CD4-positive, alpha-beta memory T cell (primary cell): ENCODE measurements at regions of chr7 and their contacts with region 1.

Region 1: DNA sequence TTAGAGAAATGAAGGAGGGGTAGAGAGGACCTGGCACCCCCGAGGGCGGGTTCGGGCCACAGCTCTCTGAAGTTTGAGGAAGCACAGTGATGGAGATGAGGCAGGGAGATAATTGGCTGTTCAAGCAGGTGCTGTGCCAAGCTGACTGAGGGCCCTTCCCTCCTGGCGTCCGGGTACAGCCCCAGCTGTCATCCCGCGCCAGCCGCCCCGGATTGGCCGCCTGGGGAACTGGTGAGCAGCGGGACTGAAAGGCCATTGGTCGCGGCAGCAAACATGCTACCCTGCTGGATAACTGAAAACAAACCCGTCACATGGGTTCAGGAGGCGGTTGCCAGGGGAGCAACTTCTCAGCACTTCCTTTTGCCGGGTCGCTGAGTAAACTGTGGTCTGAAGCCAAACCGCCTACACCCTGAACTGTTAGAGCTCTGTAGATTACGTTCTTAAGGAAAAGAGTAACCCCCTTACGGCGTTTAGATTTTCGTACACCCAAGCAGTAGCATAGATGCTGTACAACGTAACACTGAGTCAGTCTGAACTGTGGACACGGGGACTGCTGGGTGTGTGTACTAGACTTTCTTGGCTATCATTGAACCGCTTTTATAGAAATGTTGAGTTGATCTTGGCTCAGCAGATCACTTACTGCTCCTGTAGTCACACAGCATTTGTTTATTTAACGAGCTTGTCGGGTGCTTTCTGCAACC is 1.3 kb downstream of the INSIG1 start:
- DNase-seq: peak; percentile 95 to 99 (median 98)
- H3K4me3 ChIP-seq: peak overlapping the region; percentile 67 to 68
- H3K4me3 Mint-ChIP-seq: peak overlapping the region; percentile 90 to 96 (median 93)
- H3K27ac ChIP-seq: peak overlapping the region; percentile 87
- H3K27ac Mint-ChIP-seq: peak overlapping the region; percentile 92 to 99 (median 96)
- H3K4me1 ChIP-seq: peaks cover 44% of the 10 kb centered on the region
- H3K4me1 Mint-ChIP-seq: peaks cover 29 to 50% (median 36%) of the 10 kb centered on the region in 4 donors
- H3K27me3 ChIP-seq: no peaks in the 10 kb centered on the region
- H3K27me3 Mint-ChIP-seq: no peaks in the 10 kb centered on the region

Region 2: DNA sequence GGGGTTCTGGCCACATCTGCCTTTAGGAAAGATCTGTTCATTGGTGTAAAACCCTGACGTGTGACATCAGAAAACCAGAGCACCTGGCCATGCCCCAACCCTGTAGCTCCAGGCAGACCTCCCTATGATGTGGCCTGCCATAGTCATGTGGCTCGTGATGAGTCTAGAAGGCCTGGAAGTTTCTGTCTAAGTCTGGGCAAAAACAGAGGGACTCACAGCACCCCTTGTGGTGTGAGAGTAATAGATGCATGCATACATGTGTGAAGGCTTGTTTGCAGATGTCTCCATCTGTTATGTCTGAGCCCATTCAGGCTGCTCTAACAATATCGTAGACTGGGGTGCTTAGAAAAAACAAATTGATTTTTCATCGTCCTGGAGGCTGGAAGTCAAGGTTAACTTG is 605.3 kb before region 1 on chr7:
- CTCF ChIA-PET with region 1: no interaction called
- POLR2A ChIA-PET with region 1: no interaction called
- intact Hi-C with region 1: no loop called
- DNase-seq: no peak
- H3K4me3 ChIP-seq: no peak overlapping the region
- H3K4me3 Mint-ChIP-seq: no peak overlapping the region
- H3K27ac ChIP-seq: no peak overlapping the region
- H3K27ac Mint-ChIP-seq: no peak overlapping the region
- H3K4me1 ChIP-seq: no peaks in the 10 kb centered on the region
- H3K4me1 Mint-ChIP-seq: no peaks in the 10 kb centered on the region
- H3K27me3 ChIP-seq: no peaks in the 10 kb centered on the region
- H3K27me3 Mint-ChIP-seq: peaks cover 0 to 3% of the 10 kb centered on the region in 2 donors

Region 3: DNA sequence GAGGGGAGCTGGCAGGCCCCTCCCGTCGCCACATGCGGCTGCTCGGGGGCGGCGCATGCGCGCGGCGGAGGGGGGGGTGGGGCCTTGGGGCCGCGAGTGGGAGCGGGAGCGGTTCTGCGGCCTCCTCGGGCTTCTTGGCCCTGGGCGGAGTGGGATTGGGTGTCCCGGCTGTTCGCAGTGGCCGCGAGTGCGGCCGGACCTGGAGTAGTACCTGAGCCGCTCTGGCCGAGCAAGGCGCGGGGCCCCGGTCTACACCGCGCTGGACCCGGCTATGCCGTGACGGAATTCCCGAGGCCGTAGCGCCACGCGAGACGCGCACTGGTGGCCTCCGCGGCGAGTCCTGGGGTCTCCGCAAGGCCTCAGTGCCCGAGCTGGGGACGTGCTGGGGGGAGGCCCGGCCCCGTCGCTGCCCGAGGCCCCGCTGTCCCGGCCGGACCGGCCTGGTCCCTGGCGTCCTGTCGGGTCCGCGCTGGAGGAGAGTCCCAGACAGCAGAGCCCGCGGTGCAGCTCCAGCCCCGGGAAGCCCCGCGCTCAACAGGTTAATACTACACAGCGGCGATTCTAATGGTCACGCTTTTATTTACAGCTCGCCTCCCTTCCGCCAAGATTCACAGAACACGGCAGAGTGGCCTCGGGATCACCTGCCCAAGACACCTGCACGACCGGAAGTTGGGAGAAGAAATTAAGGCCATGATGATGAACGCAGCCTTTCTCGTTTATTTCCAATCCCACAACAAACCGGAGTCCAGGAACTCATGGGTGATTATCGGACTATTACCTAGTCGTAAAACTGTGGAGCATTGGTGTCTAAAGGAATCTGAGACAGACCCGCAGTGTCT is 295.4 kb before region 1 on chr7:
- CTCF ChIA-PET with region 1: no interaction called
- POLR2A ChIA-PET with region 1: interaction called, 33 read pairs
- intact Hi-C with region 1: loop called (anchors 1 kb)
- DNase-seq: peak; percentile 80 to 92 (median 88)
- H3K4me3 ChIP-seq: peak overlapping the region; percentile 81 to 91
- H3K4me3 Mint-ChIP-seq: peak overlapping the region; percentile 93 to 97 (median 95)
- H3K27ac ChIP-seq: peak overlapping the region; percentile 84
- H3K27ac Mint-ChIP-seq: peak overlapping the region; percentile 38 to 96 (median 95)
- H3K4me1 ChIP-seq: peaks cover 19% of the 10 kb centered on the region
- H3K4me1 Mint-ChIP-seq: peaks cover 8 to 16% (median 12%) of the 10 kb centered on the region in 4 donors
- H3K27me3 ChIP-seq: no peaks in the 10 kb centered on the region
- H3K27me3 Mint-ChIP-seq: no peaks in the 10 kb centered on the region

Region 4: DNA sequence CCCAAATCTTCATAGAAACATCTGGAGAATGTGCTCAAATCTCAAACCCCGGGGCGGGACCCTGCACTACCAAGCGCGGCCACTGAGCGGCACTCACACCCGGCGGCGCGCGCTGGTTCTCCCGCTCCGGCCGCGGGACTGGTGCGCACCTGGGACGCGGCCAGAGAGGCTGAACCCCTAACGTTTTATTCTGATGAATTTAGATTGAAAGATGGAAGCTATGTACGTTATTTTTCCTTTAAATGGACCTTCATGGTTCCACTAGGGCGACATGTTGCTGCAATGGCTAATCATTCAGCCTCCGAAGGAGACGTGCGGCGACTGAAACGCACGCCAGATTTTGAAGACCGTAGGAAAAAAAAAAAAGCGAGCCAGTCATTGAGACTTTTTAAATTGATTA is 108.3 kb before region 1 on chr7:
- CTCF ChIA-PET with region 1: interaction called, 9 read pairs
- POLR2A ChIA-PET with region 1: interaction called, 7 read pairs
- intact Hi-C with region 1: loop called (anchors 1 kb)
- DNase-seq: peak in 4 of 5 donors; percentile 36 to 53 (median 40)
- H3K4me3 ChIP-seq: no peak overlapping the region
- H3K4me3 Mint-ChIP-seq: peak overlapping the region in 1 of 8 donors; percentile 26
- H3K27ac ChIP-seq: no peak overlapping the region
- H3K27ac Mint-ChIP-seq: no peak overlapping the region
- H3K4me1 ChIP-seq: no peaks in the 10 kb centered on the region
- H3K4me1 Mint-ChIP-seq: peaks cover 1 to 7% (median 4%) of the 10 kb centered on the region in 4 donors
- H3K27me3 ChIP-seq: no peaks in the 10 kb centered on the region
- H3K27me3 Mint-ChIP-seq: peaks cover 3 to 18% of the 10 kb centered on the region in 2 donors

Region 5: DNA sequence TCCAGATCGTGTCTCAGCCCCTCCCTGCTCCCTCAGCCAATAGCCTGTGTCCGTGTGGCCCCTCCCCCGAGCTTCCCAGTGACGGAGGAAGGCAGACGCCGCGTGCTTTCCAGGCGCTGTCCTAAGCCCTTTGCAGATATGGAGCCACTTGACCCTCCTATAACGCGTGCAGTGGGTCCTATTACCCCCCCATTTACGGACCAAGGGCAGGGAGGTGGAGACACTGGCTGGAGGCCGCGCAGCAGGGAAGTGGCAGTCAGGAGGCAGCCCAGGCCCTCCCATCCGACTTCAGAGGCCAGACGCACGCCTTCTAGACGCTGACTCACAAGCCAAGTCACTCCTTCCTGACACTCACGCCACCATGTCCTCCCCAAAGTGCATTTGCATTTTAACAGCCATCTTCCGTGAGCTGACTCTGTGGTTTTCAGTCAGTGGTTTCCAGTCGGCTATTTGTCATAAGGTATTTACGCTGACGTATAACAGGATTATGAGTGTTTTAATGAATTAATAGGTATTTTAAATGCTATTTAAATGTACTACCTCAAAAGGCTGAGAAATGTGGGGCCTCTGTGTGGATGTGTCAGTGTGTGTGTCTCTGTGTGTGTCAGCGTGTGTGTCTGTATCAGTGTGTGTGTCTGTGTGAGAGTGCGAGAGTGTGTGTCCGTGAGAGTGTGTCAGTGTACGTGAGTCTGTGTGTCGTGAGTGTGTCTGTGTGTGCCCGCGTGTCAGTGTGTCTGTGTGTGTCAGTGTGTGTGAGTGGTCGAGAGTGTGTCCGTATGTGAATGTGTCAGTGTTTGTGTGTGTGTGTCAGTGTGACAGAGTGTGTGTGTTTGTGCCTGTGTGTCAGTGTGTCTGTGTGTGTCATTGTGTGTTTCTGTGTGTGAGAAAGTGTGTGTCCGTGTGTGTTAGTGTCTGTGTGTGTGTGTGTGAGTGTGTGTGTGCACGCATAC is 93.3 kb before region 1 on chr7:
- CTCF ChIA-PET with region 1: interaction called, 7 read pairs
- POLR2A ChIA-PET with region 1: interaction called, 176 read pairs
- intact Hi-C with region 1: loop called (anchors 1 kb)
- DNase-seq: peak; percentile 88 to 97 (median 90)
- H3K4me3 ChIP-seq: peak overlapping the region; percentile 66 to 89
- H3K4me3 Mint-ChIP-seq: peak overlapping the region; percentile 83 to 93 (median 88)
- H3K27ac ChIP-seq: peak overlapping the region; percentile 77
- H3K27ac Mint-ChIP-seq: peak overlapping the region; percentile 92 to 99 (median 96)
- H3K4me1 ChIP-seq: peaks cover 15% of the 10 kb centered on the region
- H3K4me1 Mint-ChIP-seq: peaks cover 15 to 27% (median 22%) of the 10 kb centered on the region in 4 donors
- H3K27me3 ChIP-seq: no peaks in the 10 kb centered on the region
- H3K27me3 Mint-ChIP-seq: no peaks in the 10 kb centered on the region

Region 6: GRCh38 chr7:155283565-155284194 is 15.3 kb before region 1 on chr7:
- CTCF ChIA-PET with region 1: interaction called, 5 read pairs
- POLR2A ChIA-PET with region 1: interaction called, 22 read pairs
- intact Hi-C with region 1: no loop called
- DNase-seq: no peak
- H3K4me3 ChIP-seq: no peak overlapping the region
- H3K4me3 Mint-ChIP-seq: no peak overlapping the region
- H3K27ac ChIP-seq: no peak overlapping the region
- H3K27ac Mint-ChIP-seq: no peak overlapping the region
- H3K4me1 ChIP-seq: no peaks in the 10 kb centered on the region
- H3K4me1 Mint-ChIP-seq: peaks cover 16 to 24% (median 21%) of the 10 kb centered on the region in 4 donors
- H3K27me3 ChIP-seq: no peaks in the 10 kb centered on the region
- H3K27me3 Mint-ChIP-seq: peaks cover under 1 to 7% of the 10 kb centered on the region in 2 donors

Region 7: GRCh38 chr7:155312633-155313032 is 13.6 kb after region 1 on chr7:
- CTCF ChIA-PET with region 1: interaction called, 3 read pairs
- POLR2A ChIA-PET with region 1: interaction called, 10 read pairs
- intact Hi-C with region 1: no loop called
- DNase-seq: no peak
- H3K4me3 ChIP-seq: no peak overlapping the region
- H3K4me3 Mint-ChIP-seq: no peak overlapping the region
- H3K27ac ChIP-seq: no peak overlapping the region
- H3K27ac Mint-ChIP-seq: peak overlapping the region in 3 of 7 donors; percentile 4 to 48 (median 36)
- H3K4me1 ChIP-seq: no peaks in the 10 kb centered on the region
- H3K4me1 Mint-ChIP-seq: peaks cover 0 to 3% (median 0%) of the 10 kb centered on the region in 4 donors
- H3K27me3 ChIP-seq: no peaks in the 10 kb centered on the region
- H3K27me3 Mint-ChIP-seq: peaks cover 0 to 2% of the 10 kb centered on the region in 2 donors

Region 8: GRCh38 chr7:155356323-155357105 is 57.5 kb after region 1 on chr7:
- CTCF ChIA-PET with region 1: no interaction called
- POLR2A ChIA-PET with region 1: no interaction called
- intact Hi-C with region 1: no loop called
- DNase-seq: no peak
- H3K4me3 ChIP-seq: no peak overlapping the region
- H3K4me3 Mint-ChIP-seq: no peak overlapping the region
- H3K27ac ChIP-seq: no peak overlapping the region
- H3K27ac Mint-ChIP-seq: no peak overlapping the region
- H3K4me1 ChIP-seq: no peaks in the 10 kb centered on the region
- H3K4me1 Mint-ChIP-seq: peaks cover 0 to 2% (median 0%) of the 10 kb centered on the region in 4 donors
- H3K27me3 ChIP-seq: no peaks in the 10 kb centered on the region
- H3K27me3 Mint-ChIP-seq: peaks cover 23 to 25% of the 10 kb centered on the region in 2 donors

Region 9: DNA sequence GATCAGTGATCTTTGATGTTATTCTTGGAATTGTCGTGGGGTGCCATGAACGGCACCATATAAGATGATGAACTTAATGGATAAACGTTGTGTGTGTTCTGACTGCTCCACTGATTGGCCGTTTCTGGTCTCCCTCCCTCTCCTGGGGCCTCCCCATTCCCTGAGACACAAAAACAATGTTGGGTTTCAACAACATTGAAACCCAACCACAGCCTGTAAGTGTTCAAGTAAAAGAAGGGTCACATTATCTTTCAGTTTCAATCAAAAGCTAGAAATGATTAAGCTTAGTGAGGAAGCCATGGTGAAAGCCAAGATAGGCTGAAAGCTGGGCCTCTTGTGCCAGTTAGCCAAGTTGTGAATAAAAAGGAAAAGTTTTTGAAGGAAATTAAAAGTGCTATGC is 178.5 kb after region 1 on chr7:
- CTCF ChIA-PET with region 1: no interaction called
- POLR2A ChIA-PET with region 1: no interaction called
- intact Hi-C with region 1: no loop called
- DNase-seq: no peak
- H3K4me3 ChIP-seq: no peak overlapping the region
- H3K4me3 Mint-ChIP-seq: no peak overlapping the region
- H3K27ac ChIP-seq: no peak overlapping the region
- H3K27ac Mint-ChIP-seq: peak overlapping the region in 1 of 7 donors; percentile 68
- H3K4me1 ChIP-seq: no peaks in the 10 kb centered on the region
- H3K4me1 Mint-ChIP-seq: peaks cover 0 to 5% (median 2%) of the 10 kb centered on the region in 4 donors
- H3K27me3 ChIP-seq: peaks cover 5% of the 10 kb centered on the region
- H3K27me3 Mint-ChIP-seq: peaks cover 37 to 46% of the 10 kb centered on the region in 2 donors

Region 10: DNA sequence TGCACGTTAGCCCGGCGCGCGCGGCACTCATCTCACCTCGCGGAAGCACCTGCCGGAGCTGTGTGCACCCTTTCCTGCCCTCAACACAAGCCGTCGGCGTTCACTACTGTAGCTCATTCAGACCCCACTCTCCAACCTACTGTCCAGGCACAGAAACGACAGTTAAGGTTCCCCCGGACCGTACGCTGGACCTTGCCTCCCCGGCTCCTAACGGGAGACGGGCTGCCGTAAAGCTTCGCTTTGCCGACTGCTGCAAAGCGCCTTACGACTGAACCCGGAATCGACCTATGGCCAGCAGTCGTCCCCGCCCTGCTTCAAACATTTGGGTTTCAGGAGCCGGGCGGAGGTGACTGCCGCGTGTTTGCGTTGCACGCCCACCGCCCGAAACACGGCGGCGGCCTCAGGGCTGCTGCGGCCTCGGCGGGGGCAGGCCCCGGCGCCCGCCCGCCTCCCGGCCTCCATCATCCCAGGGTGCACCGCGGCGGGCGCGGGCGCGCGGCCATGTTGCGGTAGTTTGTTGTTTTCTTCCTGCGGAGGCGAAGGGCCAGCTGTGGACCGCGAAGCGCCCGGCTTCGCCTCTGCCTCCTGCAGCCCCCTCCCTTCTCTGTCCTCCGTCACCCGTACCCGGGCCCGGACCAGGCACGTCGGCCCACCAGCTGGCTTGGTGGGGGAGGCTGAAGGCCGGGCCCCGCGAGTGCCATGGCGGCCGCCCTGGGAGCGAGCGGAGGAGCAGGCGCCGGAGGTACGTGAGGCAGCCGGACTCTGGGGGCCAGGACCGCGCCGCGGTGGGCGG is 345.4 kb after region 1 on chr7 and contains the start of gene RBM33:
- CTCF ChIA-PET with region 1: no interaction called
- POLR2A ChIA-PET with region 1: interaction called, 12 read pairs
- intact Hi-C with region 1: loop called (anchors 1 kb)
- DNase-seq: peak; percentile 81 to 88 (median 84)
- H3K4me3 ChIP-seq: peak within 1 kb of the TSS; percentile 45 to 92
- H3K4me3 Mint-ChIP-seq: peak within 1 kb of the TSS; percentile 98 to 100 (median 100)
- H3K27ac ChIP-seq: peak within 1 kb of the TSS; percentile 94
- H3K27ac Mint-ChIP-seq: peak within 1 kb of the TSS; percentile 97 to 100 (median 100)
- H3K4me1 ChIP-seq: peaks cover 41% of the 10 kb centered on the region
- H3K4me1 Mint-ChIP-seq: peaks cover 33 to 56% (median 44%) of the 10 kb centered on the region in 4 donors
- H3K27me3 ChIP-seq: no peaks in the 10 kb centered on the region
- H3K27me3 Mint-ChIP-seq: no peaks in the 10 kb centered on the region
- total RNA-seq, gene RBM33: 161 to 167 TPM

Region 11: DNA sequence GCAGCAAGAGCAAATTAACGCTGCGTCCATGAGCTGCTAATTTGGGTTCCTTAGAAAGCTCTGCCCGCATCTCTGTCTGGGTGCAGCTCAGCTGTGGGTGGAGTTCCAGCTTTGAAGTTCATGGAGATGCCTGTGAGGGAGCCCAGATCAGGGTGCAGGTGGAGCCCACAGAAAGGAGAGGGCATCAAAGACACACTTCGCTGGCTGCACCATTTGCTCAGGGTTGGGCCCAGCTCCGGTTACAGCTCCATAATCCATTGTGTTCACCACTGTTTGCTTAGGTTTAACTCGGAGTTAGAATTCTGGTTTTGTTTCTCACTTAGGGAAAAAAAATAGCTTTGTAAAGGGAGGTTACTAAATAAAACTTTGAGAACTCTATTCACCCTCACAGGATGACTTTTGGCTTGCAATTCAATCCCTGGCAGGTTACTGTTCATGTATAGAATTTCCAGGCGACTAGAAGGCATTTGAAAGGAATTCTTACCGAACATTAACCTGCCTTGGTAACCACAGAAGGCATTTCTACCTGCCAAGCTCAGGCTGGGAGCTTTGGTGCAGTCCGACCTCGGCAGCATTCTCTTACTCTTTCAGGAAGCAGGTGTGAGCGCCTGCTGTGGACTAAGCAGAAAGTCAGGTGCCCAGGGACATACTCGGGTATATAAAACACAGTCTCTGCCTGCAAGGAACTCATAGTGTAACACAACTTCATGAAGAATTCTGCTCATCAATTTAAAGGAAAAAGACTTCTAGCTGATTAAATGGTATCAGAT is 1162.1 kb after region 1 on chr7:
- CTCF ChIA-PET with region 1: no interaction called
- POLR2A ChIA-PET with region 1: no interaction called
- intact Hi-C with region 1: no loop called
- DNase-seq: no peak
- H3K4me3 ChIP-seq: no peak overlapping the region
- H3K4me3 Mint-ChIP-seq: no peak overlapping the region
- H3K27ac ChIP-seq: no peak overlapping the region
- H3K27ac Mint-ChIP-seq: no peak overlapping the region
- H3K4me1 ChIP-seq: no peaks in the 10 kb centered on the region
- H3K4me1 Mint-ChIP-seq: no peaks in the 10 kb centered on the region
- H3K27me3 ChIP-seq: no peaks in the 10 kb centered on the region
- H3K27me3 Mint-ChIP-seq: peaks cover 12 to 18% of the 10 kb centered on the region in 2 donors